Dorsolateral prefrontal cortex (tissue), 120 donors: ENCODE measurements at regions of chr14 and their contacts with region 1.

Region 1: GRCh38 chr14:58199726-58200479 is at the start of gene ACTR10:
- DNase-seq: peak; percentile 64 to 91 (median 76)
- H3K4me3 ChIP-seq: peak within 1 kb of the TSS; percentile 56 to 99 (median 90)
- H3K27ac ChIP-seq: peak within 1 kb of the TSS; percentile 67 to 97 (median 91)
- H3K27me3 ChIP-seq: no peaks in the 10 kb centered on the region
- CTCF ChIP-seq: peak in 5 of 56 donors; percentile 1 to 25 (median 17)
- total RNA-seq, gene ACTR10: 34.6 to 122 (median 87.5) TPM

Region 2: GRCh38 chr14:58239244-58240195 is 39.6 kb after region 1 on chr14:
- intact Hi-C with region 1: loop called (anchors 5 kb)
- DNase-seq: peak; percentile 64 to 85 (median 70)
- H3K4me3 ChIP-seq: peak overlapping the region; percentile 45 to 87 (median 73)
- H3K27ac ChIP-seq: peak overlapping the region; percentile 20 to 89 (median 79)
- H3K27me3 ChIP-seq: no peaks in the 10 kb centered on the region
- CTCF ChIP-seq: peak in 3 of 56 donors; percentile 6 to 19 (median 8)